IMR-90 (cell line): ENCODE measurements at regions of chr19 and their contacts with region 1.

Region 1: GRCh38 chr19:40465557-40466150 is at the start of gene BLVRB:
- DNase-seq: peak; percentile 99
- ATAC-seq: peak; percentile 95
- H3K4me3 ChIP-seq: peak within 1 kb of the TSS; percentile 68
- H3K27ac ChIP-seq: peak within 1 kb of the TSS; percentile 57
- H3K4me1 ChIP-seq: peaks cover 16% of the 10 kb centered on the region
- H3K27me3 ChIP-seq: peaks cover 11% of the 10 kb centered on the region; the same call in 1 of the 2 replicates
- CTCF ChIP-seq: no peak
- POLR2A ChIP-seq: no peak
- RAD21 ChIP-seq: no peak
- total RNA-seq, gene BLVRB: 65.2 and 67.5 TPM in 2 replicates

Region 2: GRCh38 chr19:40155749-40156265 is 309.8 kb before region 1 on chr19:
- CTCF ChIA-PET with region 1: no interaction called
- POLR2A ChIA-PET with region 1: no interaction called
- dilution Hi-C with region 1: no loop called
- in situ Hi-C with region 1: no loop called
- intact Hi-C with region 1: no loop called
- DNase-seq: peak; percentile 10
- ATAC-seq: peak; percentile 44; the same call in 1 of the 2 replicates
- H3K4me3 ChIP-seq: no peak overlapping the region
- H3K27ac ChIP-seq: no peak overlapping the region
- H3K4me1 ChIP-seq: no peaks in the 10 kb centered on the region
- H3K27me3 ChIP-seq: no peaks in the 10 kb centered on the region
- CTCF ChIP-seq: peak; percentile 40
- POLR2A ChIP-seq: no peak
- RAD21 ChIP-seq: peak; percentile 38

Region 3: GRCh38 chr19:40425450-40426287 is 40.0 kb before region 1 on chr19 and contains the start of gene SERTAD1:
- CTCF ChIA-PET with region 1: interaction called, 8 read pairs
- POLR2A ChIA-PET with region 1: interaction called, 3 read pairs
- dilution Hi-C with region 1: no loop called
- in situ Hi-C with region 1: no loop called
- intact Hi-C with region 1: loop called (anchors 1 kb)
- DNase-seq: peak; percentile 99
- ATAC-seq: peak; percentile 90
- H3K4me3 ChIP-seq: peak within 1 kb of the TSS; percentile 71
- H3K27ac ChIP-seq: peak within 1 kb of the TSS; percentile 98
- H3K4me1 ChIP-seq: peaks cover 2% of the 10 kb centered on the region; the same call in 1 of the 2 replicates
- H3K27me3 ChIP-seq: no peaks in the 10 kb centered on the region
- CTCF ChIP-seq: peak; percentile 49
- POLR2A ChIP-seq: peak; percentile 99
- RAD21 ChIP-seq: no peak
- total RNA-seq, gene SERTAD1: 25.6 and 27.4 TPM in 2 replicates

Region 4: DNA sequence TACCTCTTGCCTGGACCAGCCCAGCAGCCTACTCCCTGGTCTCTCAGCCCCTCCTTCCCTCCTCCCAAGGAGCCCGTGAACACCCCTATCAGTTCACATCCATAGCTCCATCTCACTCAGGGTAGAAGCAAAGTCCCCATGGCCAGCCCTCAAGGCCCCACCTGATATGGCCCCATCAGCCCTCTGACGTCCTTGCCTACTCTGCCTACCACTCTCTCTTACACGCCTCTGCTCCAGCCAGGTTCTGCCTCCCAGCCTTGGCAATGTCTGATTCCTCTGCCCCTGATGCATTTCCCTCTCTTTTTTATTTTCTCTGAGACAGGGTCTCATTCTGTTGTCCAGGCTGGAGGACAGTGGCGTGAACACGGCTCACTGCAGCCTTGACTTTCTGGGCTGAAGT is 13.6 kb before region 1 on chr19:
- CTCF ChIA-PET with region 1: interaction called, 10 read pairs
- POLR2A ChIA-PET with region 1: no interaction called
- dilution Hi-C with region 1: no loop called
- in situ Hi-C with region 1: no loop called
- intact Hi-C with region 1: no loop called
- DNase-seq: no peak
- ATAC-seq: no peak
- H3K4me3 ChIP-seq: no peak overlapping the region
- H3K27ac ChIP-seq: no peak overlapping the region
- H3K4me1 ChIP-seq: no peaks in the 10 kb centered on the region; the same call in 1 of the 2 replicates
- H3K27me3 ChIP-seq: no peaks in the 10 kb centered on the region
- CTCF ChIP-seq: no peak
- POLR2A ChIP-seq: no peak
- RAD21 ChIP-seq: no peak

Region 5: GRCh38 chr19:40523322-40524047 is 57.8 kb after region 1 on chr19:
- CTCF ChIA-PET with region 1: interaction called, 10 read pairs
- POLR2A ChIA-PET with region 1: no interaction called
- dilution Hi-C with region 1: no loop called
- in situ Hi-C with region 1: no loop called
- intact Hi-C with region 1: loop called (anchors 10 kb)
- DNase-seq: peak; percentile 44
- ATAC-seq: peak; percentile 85
- H3K4me3 ChIP-seq: no peak overlapping the region
- H3K27ac ChIP-seq: no peak overlapping the region
- H3K4me1 ChIP-seq: no peaks in the 10 kb centered on the region
- H3K27me3 ChIP-seq: peaks cover 18% of the 10 kb centered on the region; the same call in 1 of the 2 replicates
- CTCF ChIP-seq: peak; percentile 62
- POLR2A ChIP-seq: no peak
- RAD21 ChIP-seq: peak; percentile 49

Region 6: GRCh38 chr19:40529093-40529954 is 63.7 kb after region 1 on chr19:
- CTCF ChIA-PET with region 1: no interaction called
- POLR2A ChIA-PET with region 1: no interaction called
- dilution Hi-C with region 1: no loop called
- in situ Hi-C with region 1: no loop called
- intact Hi-C with region 1: loop called (anchors 10 kb)
- DNase-seq: peak; percentile 61
- ATAC-seq: peak; percentile 91
- H3K4me3 ChIP-seq: peak overlapping the region; percentile 37
- H3K27ac ChIP-seq: no peak overlapping the region
- H3K4me1 ChIP-seq: peaks cover 3% of the 10 kb centered on the region; the same call in 1 of the 2 replicates
- H3K27me3 ChIP-seq: peaks cover 18% of the 10 kb centered on the region
- CTCF ChIP-seq: peak; percentile 95
- POLR2A ChIP-seq: no peak
- RAD21 ChIP-seq: peak; percentile 59

Region 7: DNA sequence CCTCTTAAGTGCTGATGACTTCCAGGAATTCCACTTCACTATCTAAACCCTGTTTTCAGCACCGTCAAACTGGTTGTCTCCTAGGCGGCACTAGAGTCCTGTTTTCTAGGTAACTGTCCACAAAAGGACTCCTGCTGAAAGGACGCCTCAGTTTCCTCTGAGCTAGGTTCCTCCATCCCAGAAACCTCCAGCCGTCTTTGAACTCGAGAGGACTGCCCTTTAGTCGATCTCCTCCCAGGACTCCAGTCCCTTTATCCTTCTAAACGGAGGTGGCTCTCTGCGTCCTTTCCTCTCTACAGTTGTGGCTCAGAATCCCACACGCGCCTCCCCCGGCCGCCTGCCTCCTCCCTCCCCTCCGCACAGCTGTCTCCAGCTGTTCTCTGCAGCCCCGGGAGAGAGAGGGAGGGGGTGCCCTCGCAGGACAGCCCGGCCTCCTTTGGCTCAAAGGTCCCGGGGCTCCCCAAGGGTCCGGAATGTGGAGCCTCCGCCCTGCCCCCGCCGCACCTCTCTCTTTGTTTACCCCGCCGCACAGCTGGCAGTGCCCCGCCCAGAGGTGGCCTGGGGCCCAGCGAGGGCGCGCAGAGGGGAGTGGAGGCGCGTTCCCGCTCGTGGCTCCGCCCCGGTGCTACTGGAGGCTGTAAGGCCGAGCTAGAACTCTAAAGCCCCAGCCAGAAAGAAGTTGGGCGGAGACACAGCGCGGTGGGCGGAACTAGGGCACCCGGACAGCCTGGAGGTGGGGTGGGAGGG is 137.9 kb after region 1 on chr19:
- CTCF ChIA-PET with region 1: no interaction called
- POLR2A ChIA-PET with region 1: no interaction called
- dilution Hi-C with region 1: no loop called
- in situ Hi-C with region 1: no loop called
- intact Hi-C with region 1: loop called (anchors 1 kb)
- DNase-seq: peak; percentile 92
- ATAC-seq: peak; percentile 85
- H3K4me3 ChIP-seq: peak overlapping the region; percentile 9
- H3K27ac ChIP-seq: peak overlapping the region; percentile 96
- H3K4me1 ChIP-seq: peaks cover 20% of the 10 kb centered on the region
- H3K27me3 ChIP-seq: no peaks in the 10 kb centered on the region
- CTCF ChIP-seq: peak; percentile 21; the same call in 1 of the 2 replicates
- POLR2A ChIP-seq: no peak
- RAD21 ChIP-seq: no peak

Region 8: DNA sequence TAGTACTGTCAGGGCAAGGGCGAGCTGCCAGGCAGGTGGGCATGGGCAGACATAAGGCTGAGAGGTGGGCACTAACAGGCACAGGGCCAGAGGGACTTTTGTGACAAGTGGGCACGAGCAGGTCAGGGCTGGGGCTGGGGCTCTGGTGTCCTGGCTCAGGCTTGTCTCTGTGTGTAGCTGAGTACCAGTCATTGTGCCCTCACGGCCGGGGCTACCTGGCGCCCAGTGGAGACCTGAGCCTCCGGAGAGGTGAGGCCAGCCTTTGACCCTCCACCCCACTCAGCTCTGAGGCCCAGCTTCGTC is 157.1 kb after region 1 on chr19:
- CTCF ChIA-PET with region 1: no interaction called
- POLR2A ChIA-PET with region 1: no interaction called
- dilution Hi-C with region 1: no loop called
- in situ Hi-C with region 1: no loop called
- intact Hi-C with region 1: no loop called
- DNase-seq: no peak
- ATAC-seq: no peak
- H3K4me3 ChIP-seq: no peak overlapping the region
- H3K27ac ChIP-seq: no peak overlapping the region
- H3K4me1 ChIP-seq: peaks cover 8% of the 10 kb centered on the region; the same call in 1 of the 2 replicates
- H3K27me3 ChIP-seq: no peaks in the 10 kb centered on the region
- CTCF ChIP-seq: no peak
- POLR2A ChIP-seq: no peak
- RAD21 ChIP-seq: no peak

Region 9: GRCh38 chr19:40633207-40633606 is 167.6 kb after region 1 on chr19:
- CTCF ChIA-PET with region 1: interaction called, 10 read pairs
- POLR2A ChIA-PET with region 1: no interaction called
- dilution Hi-C with region 1: no loop called
- in situ Hi-C with region 1: no loop called
- intact Hi-C with region 1: no loop called
- DNase-seq: peak; percentile 85
- ATAC-seq: peak; percentile 68
- H3K4me3 ChIP-seq: no peak overlapping the region
- H3K27ac ChIP-seq: peak overlapping the region; percentile 89
- H3K4me1 ChIP-seq: peaks cover 14% of the 10 kb centered on the region
- H3K27me3 ChIP-seq: no peaks in the 10 kb centered on the region
- CTCF ChIP-seq: no peak
- POLR2A ChIP-seq: no peak
- RAD21 ChIP-seq: no peak